ENCODE measurements at regions of chr10 and their contacts with region 1.

Region 1: GRCh38 chr10:21953585-21954057 is 49.9 kb downstream of the DNAJC1 start:
- DNase-seq: peak; percentile 53
- ATAC-seq: peak; percentile 72
- H3K4me3 ChIP-seq: no peak overlapping the region
- H3K27ac ChIP-seq: no peak overlapping the region
- H3K4me1 ChIP-seq: peaks cover 0 to 4% of the 10 kb centered on the region in 2 experiments; a peak in 1 of 4 replicates
- H3K27me3 ChIP-seq: no peaks in the 10 kb centered on the region
- CTCF ChIP-seq: peak; percentile 25 to 61 (median 50); a peak in 4 of 6 replicates
- POLR2A ChIP-seq: no peak
- RAD21 ChIP-seq: peak; percentile 65

Region 2: GRCh38 chr10:21078410-21079329 is 875.0 kb before region 1 on chr10:
- CTCF ChIA-PET with region 1: no interaction called
- POLR2A ChIA-PET with region 1: no interaction called
- RAD21 ChIA-PET with region 1: no interaction called
- intact Hi-C with region 1: loop called (anchors 1 kb)
- DNase-seq: peak; percentile 58
- ATAC-seq: peak; percentile 98
- H3K4me3 ChIP-seq: no peak overlapping the region
- H3K27ac ChIP-seq: no peak overlapping the region
- H3K4me1 ChIP-seq: peaks cover 0 to 6% of the 10 kb centered on the region in 2 experiments; a peak in 2 of 4 replicates
- H3K27me3 ChIP-seq: no peaks in the 10 kb centered on the region
- CTCF ChIP-seq: peak; percentile 64 to 84 (median 79)
- POLR2A ChIP-seq: no peak
- RAD21 ChIP-seq: peak; percentile 87

Region 3: DNA sequence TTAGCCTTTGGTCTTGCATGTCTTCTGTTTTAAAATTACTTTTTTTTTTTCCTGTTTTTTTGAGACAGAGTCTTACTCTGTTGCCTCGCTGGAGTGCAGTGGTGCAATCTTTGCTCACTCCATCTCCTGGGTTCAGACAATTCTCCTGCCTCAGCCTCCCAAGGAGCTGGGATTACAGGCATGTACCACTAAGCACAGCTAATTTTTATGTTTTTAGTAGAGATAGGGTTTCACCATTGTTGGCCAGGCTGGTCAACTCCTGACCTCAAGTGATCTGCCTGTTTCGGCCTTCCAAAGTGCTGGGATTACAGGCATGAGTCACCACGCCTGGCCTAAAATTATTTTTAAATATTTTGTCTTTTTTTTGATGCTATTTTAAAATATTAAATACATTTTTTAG is 381.0 kb before region 1 on chr10:
- CTCF ChIA-PET with region 1: no interaction called
- POLR2A ChIA-PET with region 1: no interaction called
- RAD21 ChIA-PET with region 1: no interaction called
- intact Hi-C with region 1: no loop called
- DNase-seq: no peak
- ATAC-seq: no peak
- H3K4me3 ChIP-seq: no peak overlapping the region
- H3K27ac ChIP-seq: no peak overlapping the region
- H3K4me1 ChIP-seq: no peaks in the 10 kb centered on the region; a peak in 1 of 4 replicates
- H3K27me3 ChIP-seq: no peaks in the 10 kb centered on the region
- CTCF ChIP-seq: no peak
- POLR2A ChIP-seq: no peak
- RAD21 ChIP-seq: no peak

Region 4: GRCh38 chr10:22042557-22043326 is 89.1 kb after region 1 on chr10:
- CTCF ChIA-PET with region 1: no interaction called
- POLR2A ChIA-PET with region 1: no interaction called
- RAD21 ChIA-PET with region 1: no interaction called
- intact Hi-C with region 1: no loop called
- DNase-seq: peak; percentile 33
- ATAC-seq: peak; percentile 87
- H3K4me3 ChIP-seq: peak overlapping the region; percentile 37 to 54
- H3K27ac ChIP-seq: peak overlapping the region; percentile 44
- H3K4me1 ChIP-seq: peaks cover 0 to 19% of the 10 kb centered on the region in 2 experiments; a peak in 3 of 4 replicates
- H3K27me3 ChIP-seq: no peaks in the 10 kb centered on the region
- CTCF ChIP-seq: no peak
- POLR2A ChIP-seq: no peak
- RAD21 ChIP-seq: peak; percentile 4; the same call in 1 of the 2 replicates

Region 5: GRCh38 chr10:22259280-22259679 is 305.7 kb after region 1 on chr10:
- CTCF ChIA-PET with region 1: no interaction called
- POLR2A ChIA-PET with region 1: no interaction called
- RAD21 ChIA-PET with region 1: no interaction called
- intact Hi-C with region 1: no loop called
- DNase-seq: no peak
- ATAC-seq: peak; percentile 69
- H3K4me3 ChIP-seq: no peak overlapping the region
- H3K27ac ChIP-seq: no peak overlapping the region
- H3K4me1 ChIP-seq: no peaks in the 10 kb centered on the region
- H3K27me3 ChIP-seq: no peaks in the 10 kb centered on the region
- CTCF ChIP-seq: peak in 2 of 3 experiments; percentile 12 to 19; a peak in 2 of 6 replicates
- POLR2A ChIP-seq: no peak
- RAD21 ChIP-seq: peak; percentile 45

Measured in HCT116 (cell line).